Naive thymus-derived CD4-positive, alpha-beta T cell (primary cell): ENCODE measurements at regions of chr11 and their contacts with region 1.

Region 1: GRCh38 chr11:10933455-10934292 is 75.8 kb upstream of the ZBED5 start:
- DNase-seq: peak; percentile 55 to 80 (median 74)
- ATAC-seq: peak; percentile 95
- H3K4me3 ChIP-seq: peak overlapping the region; percentile 62
- H3K4me3 Mint-ChIP-seq: peak overlapping the region; percentile 77 to 92 (median 90)
- H3K27ac ChIP-seq: no peak overlapping the region
- H3K27ac Mint-ChIP-seq: peak overlapping the region in 5 of 9 donors; percentile 12 to 77 (median 33)
- H3K4me1 ChIP-seq: peaks cover 0 to 6% of the 10 kb centered on the region in 2 donors
- H3K4me1 Mint-ChIP-seq: peaks cover 10 to 21% (median 17%) of the 10 kb centered on the region in 7 donors
- H3K27me3 ChIP-seq: peaks cover 3 to 5% of the 10 kb centered on the region in 2 donors
- H3K27me3 Mint-ChIP-seq: peaks cover 9 to 63% (median 29%) of the 10 kb centered on the region in 5 donors

Region 2: DNA sequence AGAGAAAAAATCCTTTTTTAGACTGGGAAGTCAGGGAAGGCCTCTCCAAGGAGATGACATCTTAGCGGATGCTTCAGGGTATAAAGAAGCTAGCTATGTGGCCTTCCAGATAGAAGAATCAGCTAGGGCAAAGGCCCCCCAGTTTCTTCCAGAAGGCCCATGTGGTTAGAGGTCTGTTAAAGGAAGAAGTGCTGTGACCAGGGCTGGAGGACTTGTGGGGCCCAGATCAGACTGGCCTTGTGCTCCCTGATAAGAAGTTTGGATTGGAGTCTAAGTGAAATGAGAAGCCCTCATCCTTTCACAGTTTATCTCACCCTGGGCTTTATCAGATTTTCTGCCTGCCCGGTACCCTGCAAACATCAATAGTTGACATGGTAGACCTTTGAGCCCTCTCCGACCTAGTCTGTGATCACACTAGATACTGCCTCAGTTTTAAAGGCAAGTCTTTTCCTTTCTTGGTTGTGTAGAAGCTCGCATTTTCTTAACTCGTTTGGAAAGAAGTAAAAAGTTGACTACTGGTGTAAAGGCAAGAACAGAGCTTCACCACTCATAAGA is 470.9 kb before region 1 on chr11:
- CTCF ChIA-PET with region 1: no interaction called
- POLR2A ChIA-PET with region 1: no interaction called
- intact Hi-C with region 1: no loop called
- DNase-seq: no peak
- ATAC-seq: no peak
- H3K4me3 ChIP-seq: no peak overlapping the region
- H3K4me3 Mint-ChIP-seq: no peak overlapping the region
- H3K27ac ChIP-seq: no peak overlapping the region
- H3K27ac Mint-ChIP-seq: peak overlapping the region in 1 of 9 donors; percentile 14
- H3K4me1 ChIP-seq: peaks cover 20 to 30% of the 10 kb centered on the region in 2 donors
- H3K4me1 Mint-ChIP-seq: peaks cover 27 to 59% (median 46%) of the 10 kb centered on the region in 7 donors
- H3K27me3 ChIP-seq: no peaks in the 10 kb centered on the region
- H3K27me3 Mint-ChIP-seq: no peaks in the 10 kb centered on the region

Region 3: DNA sequence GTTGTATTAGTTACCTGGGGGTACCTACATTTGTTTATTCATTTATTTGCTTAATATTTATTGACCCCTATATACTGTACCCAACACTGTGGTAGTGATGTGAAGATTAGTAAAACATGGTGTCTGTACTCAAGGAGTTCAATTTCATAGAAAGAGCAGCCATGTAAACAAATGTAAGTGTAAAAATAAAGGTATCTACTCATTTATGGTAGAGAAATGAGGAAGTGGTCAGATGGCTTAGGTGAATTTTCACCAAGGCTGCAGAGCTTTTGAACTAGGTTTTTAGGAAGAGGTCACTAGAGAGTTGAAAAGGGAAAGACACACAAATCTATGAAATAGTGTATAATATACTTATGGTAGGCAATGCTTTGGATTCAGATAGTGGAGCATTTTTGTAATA is 171.5 kb before region 1 on chr11:
- CTCF ChIA-PET with region 1: no interaction called
- POLR2A ChIA-PET with region 1: no interaction called
- intact Hi-C with region 1: no loop called
- DNase-seq: no peak
- ATAC-seq: no peak
- H3K4me3 ChIP-seq: no peak overlapping the region
- H3K4me3 Mint-ChIP-seq: no peak overlapping the region
- H3K27ac ChIP-seq: no peak overlapping the region
- H3K27ac Mint-ChIP-seq: peak overlapping the region in 5 of 9 donors; percentile 8 to 58 (median 16)
- H3K4me1 ChIP-seq: no peaks in the 10 kb centered on the region
- H3K4me1 Mint-ChIP-seq: peaks cover 0 to 13% (median 0%) of the 10 kb centered on the region in 7 donors
- H3K27me3 ChIP-seq: no peaks in the 10 kb centered on the region
- H3K27me3 Mint-ChIP-seq: no peaks in the 10 kb centered on the region

Region 4: GRCh38 chr11:10857709-10858438 is 75.8 kb before region 1 on chr11 and contains the start of gene ZBED5:
- CTCF ChIA-PET with region 1: no interaction called
- POLR2A ChIA-PET with region 1: no interaction called
- intact Hi-C with region 1: loop called (anchors 1 to 5 kb)
- DNase-seq: peak; percentile 93 to 97 (median 96)
- ATAC-seq: peak; percentile 94
- H3K4me3 ChIP-seq: peak within 1 kb of the TSS; percentile 91
- H3K4me3 Mint-ChIP-seq: peak within 1 kb of the TSS; percentile 94 to 100 (median 99)
- H3K27ac ChIP-seq: peak within 1 kb of the TSS; percentile 91
- H3K27ac Mint-ChIP-seq: peak within 1 kb of the TSS; percentile 98 to 100 (median 100)
- H3K4me1 ChIP-seq: peaks cover 5 to 9% of the 10 kb centered on the region in 2 donors
- H3K4me1 Mint-ChIP-seq: peaks cover 20 to 73% (median 60%) of the 10 kb centered on the region in 7 donors
- H3K27me3 ChIP-seq: no peaks in the 10 kb centered on the region
- H3K27me3 Mint-ChIP-seq: peaks cover 0 to 2% (median 0%) of the 10 kb centered on the region in 5 donors
- total RNA-seq, gene ZBED5: 56.7 to 146 (median 94.0) TPM

Region 5: DNA sequence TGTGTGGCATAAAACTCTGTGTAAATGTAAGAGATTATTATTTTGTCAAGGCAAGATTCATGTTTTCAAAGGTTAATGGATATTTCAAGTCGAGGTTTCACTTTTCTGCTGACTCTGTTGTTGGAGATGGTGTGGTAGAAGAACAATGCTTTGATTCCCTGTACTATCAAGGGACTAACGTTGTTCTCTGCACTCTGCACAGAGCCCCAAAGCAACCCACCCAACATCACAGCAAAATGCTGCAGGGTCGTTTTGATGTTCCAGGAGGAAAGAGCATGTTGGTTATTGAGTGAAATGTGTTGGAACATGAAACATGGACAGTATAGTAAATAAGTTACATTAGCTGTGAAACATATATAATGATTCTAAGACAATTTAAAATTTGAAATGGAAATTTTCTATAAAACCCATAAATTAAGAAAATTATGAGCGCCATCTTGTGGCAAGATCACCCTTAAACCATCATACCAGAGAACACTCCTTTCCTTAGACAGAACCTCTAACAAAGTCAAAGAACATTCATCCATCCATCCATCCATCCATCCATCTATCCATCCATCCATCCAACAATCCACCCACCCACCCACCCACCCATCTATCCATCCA is 88.6 kb after region 1 on chr11:
- CTCF ChIA-PET with region 1: interaction called, 38 read pairs
- POLR2A ChIA-PET with region 1: interaction called, 3 read pairs
- intact Hi-C with region 1: loop called (anchors 1 kb)
- DNase-seq: peak in 4 of 9 donors; percentile 9 to 35 (median 26)
- ATAC-seq: peak; percentile 37
- H3K4me3 ChIP-seq: no peak overlapping the region
- H3K4me3 Mint-ChIP-seq: no peak overlapping the region
- H3K27ac ChIP-seq: no peak overlapping the region
- H3K27ac Mint-ChIP-seq: no peak overlapping the region
- H3K4me1 ChIP-seq: no peaks in the 10 kb centered on the region
- H3K4me1 Mint-ChIP-seq: no peaks in the 10 kb centered on the region
- H3K27me3 ChIP-seq: no peaks in the 10 kb centered on the region
- H3K27me3 Mint-ChIP-seq: peaks cover 0 to 17% (median 0%) of the 10 kb centered on the region in 5 donors

Region 6: DNA sequence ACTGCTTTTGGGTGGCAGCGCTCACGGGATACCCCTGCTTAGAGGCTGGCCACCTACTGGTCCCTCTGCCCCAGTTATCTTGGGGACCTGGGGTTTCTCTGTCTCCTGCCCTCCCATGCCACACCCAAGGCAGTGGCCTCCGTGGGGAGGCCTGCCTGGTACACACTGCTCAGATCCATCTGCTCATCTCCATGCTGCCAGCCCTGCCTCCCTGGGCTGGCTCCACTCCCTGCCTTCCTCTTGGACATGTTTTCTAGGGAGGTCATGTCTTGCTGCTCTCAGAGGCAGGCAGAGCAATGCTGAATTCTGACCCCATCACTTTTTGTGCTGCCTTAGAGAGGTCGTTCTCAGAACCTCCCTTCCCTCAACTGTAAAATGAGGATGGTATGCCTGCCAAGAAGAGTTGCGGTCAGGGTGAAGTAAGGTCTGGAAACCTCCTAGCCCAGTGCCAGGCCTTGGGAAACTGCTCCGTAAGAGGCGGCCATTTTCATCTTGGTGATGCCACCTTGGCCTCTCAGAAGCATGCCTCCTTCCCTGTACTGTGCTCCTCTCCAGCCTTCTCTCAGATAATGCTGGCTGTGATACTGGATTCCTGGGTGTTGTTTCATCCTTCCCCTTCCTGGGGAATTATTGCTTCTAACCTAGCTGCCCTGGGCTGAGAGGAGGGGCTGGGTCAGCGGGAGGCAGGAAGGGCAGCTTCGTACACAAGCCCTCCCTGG is 110.6 kb after region 1 on chr11:
- CTCF ChIA-PET with region 1: no interaction called
- POLR2A ChIA-PET with region 1: no interaction called
- intact Hi-C with region 1: no loop called
- DNase-seq: no peak
- ATAC-seq: no peak
- H3K4me3 ChIP-seq: no peak overlapping the region
- H3K4me3 Mint-ChIP-seq: no peak overlapping the region
- H3K27ac ChIP-seq: no peak overlapping the region
- H3K27ac Mint-ChIP-seq: no peak overlapping the region
- H3K4me1 ChIP-seq: no peaks in the 10 kb centered on the region
- H3K4me1 Mint-ChIP-seq: peaks cover 0 to 3% (median 0%) of the 10 kb centered on the region in 7 donors
- H3K27me3 ChIP-seq: no peaks in the 10 kb centered on the region
- H3K27me3 Mint-ChIP-seq: peaks cover 0 to 1% (median 0%) of the 10 kb centered on the region in 5 donors

Region 7: GRCh38 chr11:11148104-11148509 is 214.4 kb after region 1 on chr11:
- CTCF ChIA-PET with region 1: interaction called, 5 read pairs
- POLR2A ChIA-PET with region 1: interaction called, 5 read pairs
- intact Hi-C with region 1: loop called in 1 of 2 experiments (anchors 2 kb)
- DNase-seq: peak in 7 of 9 donors; percentile 29 to 43 (median 35)
- ATAC-seq: no peak
- H3K4me3 ChIP-seq: no peak overlapping the region
- H3K4me3 Mint-ChIP-seq: peak overlapping the region in 9 of 10 donors; percentile 20 to 84 (median 70)
- H3K27ac ChIP-seq: peak overlapping the region; percentile 87
- H3K27ac Mint-ChIP-seq: peak overlapping the region in 8 of 9 donors; percentile 93 to 99 (median 98)
- H3K4me1 ChIP-seq: peaks cover 31 to 61% of the 10 kb centered on the region in 2 donors
- H3K4me1 Mint-ChIP-seq: peaks cover 32 to 74% (median 70%) of the 10 kb centered on the region in 7 donors
- H3K27me3 ChIP-seq: no peaks in the 10 kb centered on the region
- H3K27me3 Mint-ChIP-seq: peaks cover 0 to 2% (median 0%) of the 10 kb centered on the region in 5 donors

Region 8: DNA sequence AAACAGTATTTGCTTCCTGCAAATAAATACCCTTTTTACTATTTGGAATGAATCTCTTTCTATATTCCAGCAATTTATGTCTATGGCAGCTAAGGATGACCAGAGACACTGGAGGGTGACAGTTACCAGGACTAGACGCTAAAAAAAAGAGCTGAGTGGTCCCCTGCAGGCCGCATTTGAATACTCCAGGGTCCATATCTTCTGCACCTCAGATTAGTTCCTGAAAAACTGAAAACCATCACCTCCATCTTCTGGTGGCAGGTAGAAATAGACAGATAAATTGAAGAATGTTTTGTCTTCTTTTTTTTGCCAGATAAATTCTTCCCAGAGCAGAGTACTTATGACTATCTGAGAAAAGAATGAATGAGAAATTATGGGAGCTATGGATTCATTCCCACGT is 273.8 kb after region 1 on chr11:
- CTCF ChIA-PET with region 1: no interaction called
- POLR2A ChIA-PET with region 1: no interaction called
- intact Hi-C with region 1: loop called in 1 of 2 experiments (anchors 1 kb)
- DNase-seq: peak in 1 of 9 donors; percentile 2
- ATAC-seq: no peak
- H3K4me3 ChIP-seq: no peak overlapping the region
- H3K4me3 Mint-ChIP-seq: no peak overlapping the region
- H3K27ac ChIP-seq: no peak overlapping the region
- H3K27ac Mint-ChIP-seq: no peak overlapping the region
- H3K4me1 ChIP-seq: no peaks in the 10 kb centered on the region
- H3K4me1 Mint-ChIP-seq: no peaks in the 10 kb centered on the region
- H3K27me3 ChIP-seq: no peaks in the 10 kb centered on the region
- H3K27me3 Mint-ChIP-seq: peaks cover 10 to 34% (median 21%) of the 10 kb centered on the region in 5 donors

Region 9: GRCh38 chr11:11621573-11622319 is 688.1 kb after region 1 on chr11 and contains the start of gene GALNT18:
- CTCF ChIA-PET with region 1: no interaction called
- POLR2A ChIA-PET with region 1: no interaction called
- intact Hi-C with region 1: loop called in 1 of 2 experiments (anchors 10 kb)
- DNase-seq: peak; percentile 11 to 89 (median 27)
- ATAC-seq: peak; percentile 95
- H3K4me3 ChIP-seq: peak within 1 kb of the TSS; percentile 17
- H3K4me3 Mint-ChIP-seq: peak within 1 kb of the TSS in 9 of 10 donors; percentile 57 to 89 (median 65)
- H3K27ac ChIP-seq: no peak within 1 kb of the TSS
- H3K27ac Mint-ChIP-seq: no peak within 1 kb of the TSS
- H3K4me1 ChIP-seq: peaks cover 0 to 7% of the 10 kb centered on the region in 2 donors
- H3K4me1 Mint-ChIP-seq: peaks cover 0 to 15% (median 8%) of the 10 kb centered on the region in 7 donors
- H3K27me3 ChIP-seq: peaks cover 3 to 6% of the 10 kb centered on the region in 2 donors
- H3K27me3 Mint-ChIP-seq: peaks cover 30 to 66% (median 45%) of the 10 kb centered on the region in 5 donors
- total RNA-seq, gene GALNT18: 0.20 to 1.7 TPM in 2 of 5 experiments, not detected in the others

Region 10: GRCh38 chr11:12043959-12044819 is 1110.5 kb after region 1 on chr11:
- CTCF ChIA-PET with region 1: no interaction called
- POLR2A ChIA-PET with region 1: no interaction called
- intact Hi-C with region 1: loop called (anchors 5 kb)
- DNase-seq: peak; percentile 17 to 64 (median 44)
- ATAC-seq: peak; percentile 74
- H3K4me3 ChIP-seq: no peak overlapping the region
- H3K4me3 Mint-ChIP-seq: no peak overlapping the region
- H3K27ac ChIP-seq: no peak overlapping the region
- H3K27ac Mint-ChIP-seq: peak overlapping the region in 1 of 9 donors; percentile 58
- H3K4me1 ChIP-seq: peaks cover 0 to 3% of the 10 kb centered on the region in 2 donors
- H3K4me1 Mint-ChIP-seq: peaks cover 0 to 9% (median 0%) of the 10 kb centered on the region in 7 donors
- H3K27me3 ChIP-seq: no peaks in the 10 kb centered on the region
- H3K27me3 Mint-ChIP-seq: peaks cover 0 to 7% (median 0%) of the 10 kb centered on the region in 5 donors